GM13976 (cell line): ENCODE measurements at regions of chr6 and their contacts with region 1.

Region 1: GRCh38 chr6:97394160-97394748 is 111.2 kb upstream of the MMS22L start:
- DNase-seq: peak; percentile 45
- CTCF ChIP-seq: peak; percentile 54

Region 2: GRCh38 chr6:97068211-97068610 is 326.0 kb before region 1 on chr6:
- in situ Hi-C with region 1: loop called (anchors 10 kb)
- DNase-seq: no peak
- CTCF ChIP-seq: peak; percentile 38

Region 3: GRCh38 chr6:97186416-97186999 is 207.7 kb before region 1 on chr6:
- in situ Hi-C with region 1: loop called (anchors 5 kb)
- DNase-seq: peak; percentile 44
- CTCF ChIP-seq: peak; percentile 96

Region 4: GRCh38 chr6:98146656-98147055 is 752.4 kb after region 1 on chr6:
- in situ Hi-C with region 1: no loop called
- DNase-seq: no peak
- CTCF ChIP-seq: no peak